Naive thymus-derived CD4-positive, alpha-beta T cell (primary cell): ENCODE measurements at regions of chr2 and their contacts with region 1.

Region 1: DNA sequence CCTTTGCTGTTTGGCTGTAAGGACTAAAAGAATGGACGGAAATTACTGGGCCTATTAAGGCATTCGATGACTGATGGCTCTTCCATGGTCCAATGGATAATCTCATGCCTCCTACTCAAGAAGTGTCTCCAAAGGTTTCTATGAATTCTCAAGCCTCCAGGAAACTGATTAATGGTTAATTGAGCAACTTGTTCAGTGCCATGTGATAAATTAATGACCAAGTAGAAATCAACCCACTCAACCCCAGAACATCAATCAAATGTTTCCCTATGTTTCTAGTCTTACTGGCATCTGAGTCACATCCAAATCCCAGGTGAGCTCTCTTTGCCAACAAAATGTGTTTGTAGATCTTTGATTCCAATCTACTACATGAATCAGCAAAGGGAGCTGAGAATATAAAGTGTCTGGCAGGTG is 103.6 kb downstream of the NXPH2 start:
- DNase-seq: no peak
- ATAC-seq: no peak
- H3K4me3 ChIP-seq: no peak overlapping the region
- H3K4me3 Mint-ChIP-seq: no peak overlapping the region
- H3K27ac ChIP-seq: no peak overlapping the region
- H3K27ac Mint-ChIP-seq: no peak overlapping the region
- H3K4me1 ChIP-seq: no peaks in the 10 kb centered on the region
- H3K4me1 Mint-ChIP-seq: no peaks in the 10 kb centered on the region
- H3K27me3 ChIP-seq: no peaks in the 10 kb centered on the region
- H3K27me3 Mint-ChIP-seq: peaks cover 0 to 17% (median 16%) of the 10 kb centered on the region in 5 donors

Region 2: GRCh38 chr2:137826373-137827372 is 850.0 kb before region 1 on chr2:
- CTCF ChIA-PET with region 1: no interaction called
- POLR2A ChIA-PET with region 1: no interaction called
- intact Hi-C with region 1: no loop called
- DNase-seq: no peak
- ATAC-seq: no peak
- H3K4me3 ChIP-seq: no peak overlapping the region
- H3K4me3 Mint-ChIP-seq: no peak overlapping the region
- H3K27ac ChIP-seq: no peak overlapping the region
- H3K27ac Mint-ChIP-seq: no peak overlapping the region
- H3K4me1 ChIP-seq: no peaks in the 10 kb centered on the region
- H3K4me1 Mint-ChIP-seq: no peaks in the 10 kb centered on the region
- H3K27me3 ChIP-seq: no peaks in the 10 kb centered on the region
- H3K27me3 Mint-ChIP-seq: peaks cover 0 to 21% (median 18%) of the 10 kb centered on the region in 5 donors

Region 3: DNA sequence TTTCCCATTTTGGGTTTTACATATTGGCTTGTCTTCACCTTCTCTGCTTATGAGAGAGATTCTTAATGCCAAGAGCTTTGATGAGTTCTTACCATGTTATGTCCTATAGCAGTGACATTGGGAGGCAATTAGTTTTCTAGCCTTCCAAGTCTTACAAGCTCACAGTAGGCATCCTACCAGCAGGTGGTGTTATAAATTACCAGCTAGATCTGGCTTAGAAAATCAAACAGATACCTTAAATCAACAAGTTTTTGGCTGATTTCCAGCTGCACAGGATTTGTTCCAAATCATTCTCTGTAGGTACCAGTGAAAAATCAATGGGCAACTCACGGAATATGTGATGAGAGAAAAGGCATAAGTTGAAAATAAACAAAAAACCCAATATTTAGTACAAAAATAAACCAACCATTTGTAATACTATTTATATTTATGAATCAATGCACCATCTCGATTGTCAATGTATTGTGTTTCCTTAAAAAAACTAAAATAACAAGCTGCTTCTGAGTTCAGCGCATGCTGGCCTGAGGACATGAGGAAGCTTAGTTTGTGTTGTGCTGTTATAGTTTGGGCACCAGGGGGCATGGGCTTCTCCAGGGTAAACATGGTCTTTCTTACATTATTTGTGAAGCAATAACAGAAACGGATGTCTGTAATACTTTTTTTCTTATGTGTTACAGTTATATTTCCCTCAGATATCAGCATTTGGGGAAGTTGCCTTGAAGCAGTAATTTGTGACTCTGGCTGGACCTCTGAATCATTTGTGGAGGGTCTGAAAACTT is 137.7 kb after region 1 on chr2:
- CTCF ChIA-PET with region 1: no interaction called
- POLR2A ChIA-PET with region 1: no interaction called
- intact Hi-C with region 1: loop called in 1 of 2 experiments (anchors 10 kb)
- DNase-seq: no peak
- ATAC-seq: peak; percentile 78
- H3K4me3 ChIP-seq: no peak overlapping the region
- H3K4me3 Mint-ChIP-seq: no peak overlapping the region
- H3K27ac ChIP-seq: no peak overlapping the region
- H3K27ac Mint-ChIP-seq: no peak overlapping the region
- H3K4me1 ChIP-seq: no peaks in the 10 kb centered on the region
- H3K4me1 Mint-ChIP-seq: peaks cover 0 to 4% (median 0%) of the 10 kb centered on the region in 7 donors
- H3K27me3 ChIP-seq: no peaks in the 10 kb centered on the region
- H3K27me3 Mint-ChIP-seq: peaks cover 3 to 38% (median 19%) of the 10 kb centered on the region in 5 donors